HEK293T (cell line): ENCODE measurements at regions of chr11 and their contacts with region 1.

Region 1: GRCh38 chr11:9982800-9983579 is 311.0 kb downstream of the SBF2 start:
- DNase-seq: no peak

Region 2: GRCh38 chr11:9972989-9973388 is 10.0 kb before region 1 on chr11:
- CTCF ChIA-PET with region 1: interaction called, 13 read pairs
- POLR2A ChIA-PET with region 1: no interaction called
- DNase-seq: peak; percentile 36